Mammary epithelial cell (primary cell): ENCODE measurements at regions of chr10 and their contacts with region 1.

Region 1: GRCh38 chr10:126504063-126504739 is 115.9 kb upstream of the ADAM12 start:
- DNase-seq: peak; percentile 30
- H3K4me3 ChIP-seq: no peak overlapping the region
- H3K27ac ChIP-seq: no peak overlapping the region
- H3K4me1 ChIP-seq: no peaks in the 10 kb centered on the region
- H3K27me3 ChIP-seq: no peaks in the 10 kb centered on the region
- CTCF ChIP-seq: peak; percentile 80 to 83

Region 2: DNA sequence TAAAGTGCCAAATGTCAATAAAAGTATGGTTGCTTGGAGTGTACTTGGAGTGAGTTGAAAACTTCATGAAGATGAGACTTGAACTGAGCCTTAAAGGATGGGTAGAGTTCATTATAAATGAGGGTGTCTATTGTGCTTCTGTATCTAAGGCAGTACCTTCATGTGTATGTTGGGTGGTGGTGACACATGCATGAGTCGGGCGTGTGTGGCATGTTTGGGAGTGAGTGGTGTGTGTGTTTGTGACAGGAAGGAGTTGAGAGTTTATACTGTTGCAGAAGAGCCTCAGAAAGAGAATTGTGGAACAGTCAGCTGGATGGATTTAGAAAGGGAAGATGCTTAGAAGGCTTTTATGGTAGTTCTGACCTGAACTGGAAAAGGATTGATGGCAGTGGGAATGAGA is 1568.3 kb before region 1 on chr10:
- CTCF ChIA-PET with region 1: no interaction called
- dilution Hi-C with region 1: no loop called
- in situ Hi-C with region 1: no loop called
- intact Hi-C with region 1: no loop called
- DNase-seq: peak; percentile 63
- H3K4me3 ChIP-seq: no peak overlapping the region
- H3K27ac ChIP-seq: no peak overlapping the region
- H3K4me1 ChIP-seq: peaks cover 5% of the 10 kb centered on the region
- H3K27me3 ChIP-seq: no peaks in the 10 kb centered on the region
- CTCF ChIP-seq: no peak

Region 3: DNA sequence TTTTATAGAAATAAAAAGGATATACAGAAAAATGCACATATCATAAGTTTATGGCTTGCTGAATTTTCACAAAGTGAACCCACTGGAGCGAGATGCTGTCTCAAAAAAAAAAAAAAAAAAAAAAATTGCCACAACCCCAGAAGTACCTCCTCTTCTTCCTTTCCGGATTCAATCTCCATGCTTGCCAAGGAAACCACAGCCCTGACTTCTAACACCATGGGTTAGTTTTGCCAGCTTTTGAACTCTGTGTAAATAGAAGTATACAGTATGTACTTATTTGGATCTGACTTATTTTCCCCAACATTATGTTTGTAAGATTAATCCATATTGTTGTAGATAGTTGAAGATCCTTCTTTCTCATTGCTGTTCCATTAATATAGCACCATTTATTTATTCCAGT is 567.9 kb before region 1 on chr10:
- CTCF ChIA-PET with region 1: interaction called, 5 read pairs
- dilution Hi-C with region 1: no loop called
- in situ Hi-C with region 1: no loop called
- intact Hi-C with region 1: loop called (anchors 1 kb)
- DNase-seq: no peak
- H3K4me3 ChIP-seq: no peak overlapping the region
- H3K27ac ChIP-seq: no peak overlapping the region
- H3K4me1 ChIP-seq: peaks cover 7% of the 10 kb centered on the region
- H3K27me3 ChIP-seq: no peaks in the 10 kb centered on the region
- CTCF ChIP-seq: no peak

Region 4: GRCh38 chr10:125976960-125977603 is 527.1 kb before region 1 on chr10:
- CTCF ChIA-PET with region 1: no interaction called
- dilution Hi-C with region 1: loop called (anchors 5 kb)
- in situ Hi-C with region 1: loop called (anchors 5 to 10 kb)
- intact Hi-C with region 1: loop called (anchors 1 kb)
- DNase-seq: no peak
- H3K4me3 ChIP-seq: no peak overlapping the region
- H3K27ac ChIP-seq: no peak overlapping the region
- H3K4me1 ChIP-seq: peaks cover 7% of the 10 kb centered on the region
- H3K27me3 ChIP-seq: no peaks in the 10 kb centered on the region
- CTCF ChIP-seq: peak in 1 of 2 donors; percentile 18

Region 5: GRCh38 chr10:126160971-126161659 is 343.1 kb before region 1 on chr10:
- CTCF ChIA-PET with region 1: no interaction called
- dilution Hi-C with region 1: no loop called
- in situ Hi-C with region 1: no loop called
- intact Hi-C with region 1: loop called (anchors 1 kb)
- DNase-seq: no peak
- H3K4me3 ChIP-seq: no peak overlapping the region
- H3K27ac ChIP-seq: no peak overlapping the region
- H3K4me1 ChIP-seq: no peaks in the 10 kb centered on the region
- H3K27me3 ChIP-seq: no peaks in the 10 kb centered on the region
- CTCF ChIP-seq: peak in 1 of 2 donors; percentile 36

Region 6: DNA sequence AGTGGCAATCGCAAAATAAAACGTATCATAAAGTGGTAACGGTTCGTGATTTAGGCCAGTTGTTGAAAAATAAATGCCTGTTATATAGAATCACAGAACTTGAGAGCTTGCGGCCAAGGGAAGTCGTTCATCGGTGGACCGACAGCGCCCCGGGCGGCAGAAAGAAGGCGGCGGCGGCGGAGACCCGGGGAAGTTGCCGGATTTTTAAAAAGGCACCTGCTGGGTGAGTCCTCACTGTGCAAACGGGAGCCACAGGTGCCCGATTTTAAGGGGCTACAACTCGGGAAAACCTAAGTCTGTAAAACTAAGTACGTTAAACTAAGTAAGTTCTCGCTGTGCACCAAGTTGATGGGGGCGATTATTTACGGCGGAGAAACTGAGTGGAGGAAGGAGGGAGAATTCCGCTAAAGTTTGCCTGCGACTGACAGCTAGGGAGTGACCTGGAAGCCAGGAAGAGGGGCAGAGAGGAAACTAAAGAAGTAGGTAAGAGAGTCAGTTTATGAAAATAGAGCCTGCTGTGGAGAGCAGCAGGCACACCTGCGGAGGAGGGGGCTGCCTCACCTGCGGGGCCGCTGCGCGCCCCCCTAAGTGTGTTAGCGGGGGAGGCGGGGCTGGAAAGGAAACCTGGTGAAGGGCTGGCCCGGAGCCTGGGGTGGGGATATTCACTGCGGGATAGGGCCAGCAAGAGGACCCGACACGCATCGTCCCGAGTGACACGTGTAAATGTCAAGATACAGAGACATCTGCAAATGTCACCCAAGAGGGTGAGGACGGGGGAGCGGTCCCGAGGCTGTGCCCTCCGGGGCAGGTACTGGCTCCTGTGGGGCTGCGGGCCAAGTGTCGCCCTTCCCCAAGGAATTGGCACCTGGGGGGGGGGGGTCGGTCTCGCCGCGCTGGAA is 116.9 kb before region 1 on chr10:
- CTCF ChIA-PET with region 1: no interaction called
- dilution Hi-C with region 1: no loop called
- in situ Hi-C with region 1: no loop called
- intact Hi-C with region 1: loop called (anchors 2 kb)
- DNase-seq: peak; percentile 46
- H3K4me3 ChIP-seq: peak overlapping the region; percentile 13 to 56 (median 52)
- H3K27ac ChIP-seq: no peak overlapping the region
- H3K4me1 ChIP-seq: peaks cover 18% of the 10 kb centered on the region
- H3K27me3 ChIP-seq: no peaks in the 10 kb centered on the region
- CTCF ChIP-seq: peak; percentile 63 to 75

Region 7: GRCh38 chr10:126749015-126749655 is 244.9 kb after region 1 on chr10:
- CTCF ChIA-PET with region 1: no interaction called
- dilution Hi-C with region 1: no loop called
- in situ Hi-C with region 1: no loop called
- intact Hi-C with region 1: loop called (anchors 1 kb)
- DNase-seq: peak; percentile 51
- H3K4me3 ChIP-seq: no peak overlapping the region
- H3K27ac ChIP-seq: no peak overlapping the region
- H3K4me1 ChIP-seq: no peaks in the 10 kb centered on the region
- H3K27me3 ChIP-seq: no peaks in the 10 kb centered on the region
- CTCF ChIP-seq: peak; percentile 84 to 90